ENCODE measurements at regions of chr22 and their contacts with region 1.

Region 1: DNA sequence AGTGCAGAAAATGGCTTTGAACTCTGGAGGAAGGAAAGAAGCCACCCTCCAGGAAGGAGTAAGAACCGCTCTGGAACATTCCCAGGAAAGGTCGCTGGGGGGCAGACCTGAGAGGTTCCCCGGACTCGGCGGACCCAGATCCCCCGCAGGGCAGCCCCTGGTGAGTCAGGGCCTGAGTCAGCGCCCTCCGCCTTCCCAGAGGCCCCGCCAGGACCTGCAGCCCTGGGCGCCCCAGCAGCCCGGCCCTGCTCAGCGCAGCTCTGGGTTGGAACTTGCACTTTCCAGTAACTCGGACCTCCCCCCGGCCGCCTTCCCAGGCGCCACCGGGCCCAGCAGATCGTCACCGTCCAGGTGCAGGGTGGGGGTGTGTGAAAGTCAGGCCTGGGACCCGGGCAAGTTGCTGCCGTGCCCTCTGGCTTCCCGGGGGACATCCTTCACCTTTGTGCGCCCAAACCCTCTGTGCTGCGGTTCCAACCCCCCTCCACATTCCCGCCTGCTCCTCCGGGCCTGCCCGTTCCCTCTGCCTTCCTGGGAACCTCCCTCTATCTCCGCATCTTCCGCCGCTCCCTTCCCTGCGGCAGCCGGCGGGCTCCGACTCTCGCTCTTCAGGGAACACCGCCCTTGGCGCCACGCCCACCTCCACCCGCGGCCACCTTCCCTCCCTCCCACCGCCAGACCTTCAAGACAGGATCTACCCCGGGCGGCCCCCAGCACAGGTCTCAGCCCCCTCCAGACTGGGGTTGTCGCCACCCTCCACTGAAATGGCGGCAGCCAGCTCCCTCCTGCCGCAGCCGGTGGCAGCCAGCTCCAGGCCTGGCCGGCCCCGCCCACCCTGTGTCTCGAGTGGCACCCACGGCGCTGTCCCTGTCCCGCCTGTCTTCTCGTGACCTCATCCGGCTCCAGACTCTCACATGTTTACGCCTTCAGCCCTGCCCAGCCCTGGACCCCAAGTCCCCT is 36.8 kb upstream of the WNT7B start:
- DNase-seq: peak; percentile 81
- H3K4me3 ChIP-seq: peak overlapping the region; percentile 36
- CTCF ChIP-seq: peak; percentile 63

Region 2: DNA sequence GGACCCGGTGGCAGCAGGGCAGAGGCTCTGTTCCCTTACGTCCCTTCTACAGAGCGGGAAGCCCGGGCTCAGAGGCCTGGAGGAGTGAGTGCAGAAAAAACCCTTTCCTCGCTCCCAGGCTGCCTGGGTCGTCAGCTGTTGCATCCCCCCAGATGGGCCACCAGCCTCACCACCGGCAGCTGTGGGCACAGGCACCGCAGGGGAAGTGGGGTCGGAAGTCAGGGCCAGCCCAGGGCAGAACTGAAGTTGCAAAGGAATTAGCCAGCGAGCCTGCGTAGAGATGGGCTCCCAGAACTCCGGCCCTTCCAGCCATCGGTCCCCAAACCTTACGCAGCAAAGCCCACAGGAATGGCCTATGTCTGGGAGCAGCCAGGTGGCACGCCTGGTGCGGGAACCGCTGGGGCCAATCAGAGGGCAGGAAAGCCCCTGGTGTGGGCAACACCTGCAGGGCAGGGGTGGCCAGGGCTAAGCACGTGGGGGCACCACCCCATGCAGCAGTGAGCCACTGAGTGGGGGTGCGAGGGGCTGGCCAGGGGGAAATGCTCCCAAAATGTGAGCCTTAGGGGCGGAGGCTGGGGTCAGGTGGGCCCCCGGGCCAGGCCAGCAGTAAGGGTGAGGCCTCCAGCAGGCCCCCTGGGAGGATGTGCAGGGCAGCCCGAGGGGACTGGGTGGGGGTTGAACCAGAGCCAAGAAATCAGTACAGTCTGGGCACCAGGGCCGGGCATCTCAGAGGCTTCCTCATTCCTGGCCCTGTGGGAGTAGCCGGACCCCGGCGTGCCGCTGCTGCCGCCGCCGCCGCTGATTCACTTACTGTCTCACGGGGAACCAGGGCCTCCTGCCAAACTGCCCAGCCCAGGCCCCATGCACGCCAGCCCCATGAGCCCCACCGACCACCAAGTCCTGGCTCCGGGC is 95.0 kb before region 1 on chr22:
- in situ Hi-C with region 1: no loop called
- DNase-seq: peak; percentile 18
- H3K4me3 ChIP-seq: no peak overlapping the region
- CTCF ChIP-seq: no peak

Region 3: DNA sequence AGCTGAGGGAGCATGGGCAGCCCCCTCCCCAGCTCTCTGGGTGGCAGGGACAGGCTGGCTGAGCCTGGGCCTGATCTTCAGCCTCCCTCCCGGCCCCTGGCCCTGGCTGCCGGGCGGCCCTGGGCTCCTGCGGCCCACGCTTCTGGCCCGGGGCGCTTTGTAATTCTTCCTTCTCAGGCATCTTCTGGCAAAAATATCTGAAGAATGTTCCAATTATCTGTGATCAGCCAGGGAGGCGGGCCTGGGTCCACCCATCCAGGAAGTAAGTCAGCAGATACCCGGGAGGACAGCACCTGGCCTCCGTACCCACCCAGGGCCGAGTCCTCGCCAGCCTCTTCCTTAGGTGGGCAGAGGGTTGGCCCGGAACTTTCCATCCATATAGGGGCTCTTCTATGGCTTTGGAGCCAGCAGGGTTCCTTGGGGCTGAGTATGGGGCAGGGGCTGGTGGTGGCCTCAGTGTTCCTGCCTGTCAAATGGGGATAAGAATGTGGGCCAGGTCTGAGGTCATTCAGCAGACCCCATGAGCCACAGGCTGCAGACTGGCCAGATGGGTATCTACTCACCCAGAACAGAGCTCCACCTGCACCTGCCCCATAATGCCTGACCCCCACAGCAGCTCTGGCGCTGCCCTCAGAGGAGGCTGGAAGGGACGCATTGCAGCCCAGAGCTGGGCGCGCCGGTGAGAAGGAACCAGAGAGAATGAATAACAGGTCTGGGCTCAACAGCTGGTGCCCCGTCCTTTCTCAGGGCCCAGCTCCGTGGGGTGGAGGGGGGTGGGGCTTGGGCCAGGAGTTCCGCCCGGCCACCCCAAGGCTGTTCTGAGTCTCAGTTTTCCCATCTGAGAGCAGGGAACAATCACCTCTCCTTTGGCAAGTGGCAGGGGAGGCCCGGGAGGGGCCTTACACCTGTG is 53.0 kb before region 1 on chr22:
- in situ Hi-C with region 1: no loop called
- DNase-seq: no peak
- H3K4me3 ChIP-seq: no peak overlapping the region
- CTCF ChIP-seq: no peak

Region 4: GRCh38 chr22:46090036-46090591 is 76.4 kb after region 1 on chr22:
- in situ Hi-C with region 1: no loop called
- DNase-seq: no peak
- H3K4me3 ChIP-seq: peak overlapping the region; percentile 6
- CTCF ChIP-seq: no peak

Region 5: GRCh38 chr22:46303347-46303965 is 289.7 kb after region 1 on chr22:
- in situ Hi-C with region 1: loop called (anchors 25 kb)
- DNase-seq: no peak
- H3K4me3 ChIP-seq: no peak overlapping the region
- CTCF ChIP-seq: no peak

Measured in astrocyte of the cerebellum (primary cell).